Left ventricle myocardium inferior (tissue), 1 donor: ENCODE measurements at regions of chr10 and their contacts with region 1.

Region 1: GRCh38 chr10:100878291-100878910 is 34.4 kb upstream of the SLF2 start:
- DNase-seq: peak; percentile 36
- H3K4me3 ChIP-seq: no peak overlapping the region
- H3K27ac ChIP-seq: no peak overlapping the region
- H3K4me1 ChIP-seq: peaks cover 14% of the 10 kb centered on the region
- H3K27me3 ChIP-seq: peaks cover 76% of the 10 kb centered on the region
- CTCF ChIP-seq: peak; percentile 69

Region 2: DNA sequence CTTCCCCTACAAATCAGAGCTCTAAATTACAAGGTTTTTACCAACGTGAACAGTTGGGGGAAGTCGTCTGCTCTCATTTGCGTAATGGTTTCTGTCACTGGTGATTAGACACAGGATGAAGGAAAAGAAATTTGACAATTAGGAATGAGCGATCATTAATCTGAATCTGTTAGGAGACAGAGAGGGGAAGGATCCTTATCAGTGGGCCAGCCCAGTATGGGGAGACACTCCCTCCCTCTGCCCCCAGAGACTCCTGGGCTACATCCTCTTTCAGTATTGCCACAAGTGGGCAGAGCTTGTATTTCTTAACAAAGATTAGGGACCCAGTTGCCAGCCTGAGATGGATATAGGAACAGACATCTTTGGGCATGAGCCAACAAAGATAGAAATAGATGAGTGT is 327.2 kb before region 1 on chr10:
- intact Hi-C with region 1: loop called (anchors 10 kb)
- DNase-seq: no peak
- H3K4me3 ChIP-seq: no peak overlapping the region
- H3K27ac ChIP-seq: no peak overlapping the region
- H3K4me1 ChIP-seq: no peaks in the 10 kb centered on the region
- H3K27me3 ChIP-seq: no peaks in the 10 kb centered on the region
- CTCF ChIP-seq: no peak

Region 3: GRCh38 chr10:101258179-101258885 is 379.9 kb after region 1 on chr10:
- intact Hi-C with region 1: no loop called
- DNase-seq: no peak
- H3K4me3 ChIP-seq: no peak overlapping the region
- H3K27ac ChIP-seq: no peak overlapping the region
- H3K4me1 ChIP-seq: no peaks in the 10 kb centered on the region
- H3K27me3 ChIP-seq: peaks cover 79% of the 10 kb centered on the region
- CTCF ChIP-seq: no peak